ENCODE measurements at regions of chr5 and their contacts with region 1.

Region 1: DNA sequence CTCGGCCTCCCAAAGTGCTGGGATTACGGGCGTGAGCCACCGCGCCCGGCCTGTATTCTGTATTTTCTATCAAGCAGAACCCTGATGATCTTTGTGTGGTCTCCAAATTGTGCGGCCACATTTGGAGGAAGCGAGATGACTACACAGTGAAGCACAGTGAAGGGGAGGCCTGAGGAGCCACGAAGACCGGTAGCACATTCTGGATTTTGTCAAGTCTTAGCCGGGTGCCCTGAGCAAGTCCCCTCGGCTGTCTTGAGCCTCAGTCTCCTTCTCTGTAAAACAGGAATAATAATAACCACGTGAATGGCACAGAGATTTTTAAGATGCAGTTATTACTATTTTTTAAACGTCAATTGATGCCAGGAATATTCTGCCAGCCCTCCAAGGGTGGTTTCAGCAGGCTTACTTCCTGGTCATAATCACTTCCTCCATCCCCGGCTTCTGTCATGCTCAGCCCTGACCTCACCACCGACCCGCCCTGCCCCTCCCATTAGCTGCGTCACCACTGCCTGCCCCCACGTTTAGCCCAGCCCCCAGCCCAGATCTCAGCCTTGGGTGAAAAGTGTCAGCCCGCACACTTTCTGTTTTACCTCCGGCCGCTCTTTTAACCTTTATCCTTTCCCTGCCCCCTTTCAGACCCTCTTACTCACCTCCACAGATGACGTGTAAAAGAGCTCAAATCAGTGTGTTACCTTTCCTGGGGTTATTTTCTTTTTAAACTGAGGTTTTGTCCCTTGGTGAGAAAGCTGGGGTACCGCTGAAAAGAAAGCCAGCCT is 27.0 kb upstream of the ERGIC1 start:
- DNase-seq: peak; percentile 97

Region 2: GRCh38 chr5:172777881-172778814 is 28.9 kb before region 1 on chr5:
- intact Hi-C with region 1: loop called in 1 of 2 experiments (anchors 1 kb)
- DNase-seq: no peak